HepG2 (cell line): ENCODE measurements at regions of chr18 and their contacts with region 1.

Region 1: GRCh38 chr18:12271376-12272235 is 17.4 kb downstream of the CIDEA start:
- DNase-seq: peak; percentile 68
- ATAC-seq: peak; percentile 97
- H3K4me3 ChIP-seq: peak overlapping the region; percentile 46 to 69 (median 62); a peak in 5 of 6 replicates
- H3K27ac ChIP-seq: no peak overlapping the region
- H3K4me1 ChIP-seq: peaks cover 10% of the 10 kb centered on the region
- H3K27me3 ChIP-seq: peaks cover 0 to 25% of the 10 kb centered on the region in 2 experiments; a peak in 3 of 5 replicates
- CTCF ChIP-seq: peak; percentile 82
- EP300 ChIP-seq: no peak
- POLR2A ChIP-seq: no peak
- RAD21 ChIP-seq: peak; percentile 75

Region 2: DNA sequence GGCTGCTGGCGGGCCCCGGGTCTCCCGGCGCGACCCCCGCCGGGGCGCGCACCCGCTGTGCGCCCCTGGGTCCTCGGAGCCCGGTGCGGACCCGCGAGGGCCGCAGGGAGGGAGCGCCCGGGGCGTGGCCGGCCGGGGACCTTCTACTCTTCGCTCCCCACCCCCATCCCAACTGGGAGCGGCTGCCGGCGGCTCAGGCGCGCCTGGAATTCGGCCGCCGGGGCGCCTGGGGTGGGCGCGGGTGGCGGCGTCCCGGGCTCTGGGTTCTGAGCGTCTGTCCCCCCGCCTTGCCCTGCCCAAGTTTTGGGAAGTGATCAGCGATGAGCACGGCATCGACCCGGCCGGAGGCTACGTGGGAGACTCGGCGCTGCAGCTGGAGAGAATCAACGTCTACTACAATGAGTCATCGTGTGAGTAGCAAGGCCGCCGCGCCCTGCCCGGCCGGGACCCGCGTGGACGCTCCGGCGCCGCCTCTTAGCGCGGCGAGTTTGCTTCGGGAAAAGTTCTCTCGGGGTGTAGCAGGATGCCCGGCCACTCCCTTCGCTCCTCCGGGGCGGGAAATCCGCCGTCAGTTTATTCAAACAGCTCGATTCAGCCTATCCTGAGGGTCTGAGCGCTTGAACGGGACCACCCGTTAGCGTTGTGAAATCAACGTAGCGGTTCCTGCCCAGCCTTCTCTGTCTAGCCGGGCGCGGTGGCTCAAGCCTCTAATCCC is 36.9 kb after region 1 on chr18:
- CTCF ChIA-PET with region 1: interaction called, 5 read pairs
- POLR2A ChIA-PET with region 1: no interaction called
- in situ Hi-C with region 1: no loop called
- intact Hi-C with region 1: loop called (anchors 5 kb)
- DNase-seq: peak; percentile 29
- ATAC-seq: peak; percentile 62
- H3K4me3 ChIP-seq: peak overlapping the region; percentile 69 to 75 (median 70)
- H3K27ac ChIP-seq: no peak overlapping the region
- H3K4me1 ChIP-seq: peaks cover 38% of the 10 kb centered on the region
- H3K27me3 ChIP-seq: peaks cover 6 to 43% of the 10 kb centered on the region in 2 experiments
- CTCF ChIP-seq: no peak
- EP300 ChIP-seq: no peak
- POLR2A ChIP-seq: no peak
- RAD21 ChIP-seq: no peak